Spleen (tissue), 13 donors: ENCODE measurements at regions of chr13 and their contacts with region 1.

Region 1: DNA sequence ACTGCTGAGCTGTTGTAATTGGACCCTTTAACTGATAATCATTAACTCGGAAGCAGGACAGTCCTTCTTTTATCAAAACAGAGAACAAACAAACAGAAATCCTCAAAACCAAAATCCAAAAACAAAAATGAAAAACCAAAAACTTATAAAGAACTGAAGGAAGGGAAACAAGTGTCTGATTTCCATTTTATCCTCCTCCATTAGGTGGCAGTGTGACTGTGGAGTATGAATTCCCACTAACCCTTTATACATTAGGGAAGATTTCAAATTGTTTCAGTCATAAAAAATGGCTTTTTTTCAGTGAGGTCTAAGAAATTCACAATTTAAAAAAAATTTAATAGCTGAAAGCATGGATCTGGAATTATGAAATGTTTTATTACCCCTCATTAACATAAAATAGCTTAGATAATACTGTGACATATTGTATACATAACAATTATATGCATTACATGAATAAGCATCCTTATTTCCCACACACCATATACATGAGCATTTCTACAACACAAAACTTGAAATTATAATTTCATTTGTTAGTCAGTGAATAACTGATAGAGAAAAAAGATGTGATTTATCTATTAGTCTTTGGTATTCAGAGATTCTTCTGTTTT is 1074.3 kb upstream of the PCDH9 start:
- DNase-seq: no peak
- H3K4me3 ChIP-seq: no peak overlapping the region
- H3K27ac ChIP-seq: no peak overlapping the region
- H3K4me1 ChIP-seq: no peaks in the 10 kb centered on the region
- H3K27me3 ChIP-seq: no peaks in the 10 kb centered on the region
- CTCF ChIP-seq: peak in 6 of 11 experiments; percentile 39 to 53 (median 44)
- POLR2A ChIP-seq: no peak

Region 2: DNA sequence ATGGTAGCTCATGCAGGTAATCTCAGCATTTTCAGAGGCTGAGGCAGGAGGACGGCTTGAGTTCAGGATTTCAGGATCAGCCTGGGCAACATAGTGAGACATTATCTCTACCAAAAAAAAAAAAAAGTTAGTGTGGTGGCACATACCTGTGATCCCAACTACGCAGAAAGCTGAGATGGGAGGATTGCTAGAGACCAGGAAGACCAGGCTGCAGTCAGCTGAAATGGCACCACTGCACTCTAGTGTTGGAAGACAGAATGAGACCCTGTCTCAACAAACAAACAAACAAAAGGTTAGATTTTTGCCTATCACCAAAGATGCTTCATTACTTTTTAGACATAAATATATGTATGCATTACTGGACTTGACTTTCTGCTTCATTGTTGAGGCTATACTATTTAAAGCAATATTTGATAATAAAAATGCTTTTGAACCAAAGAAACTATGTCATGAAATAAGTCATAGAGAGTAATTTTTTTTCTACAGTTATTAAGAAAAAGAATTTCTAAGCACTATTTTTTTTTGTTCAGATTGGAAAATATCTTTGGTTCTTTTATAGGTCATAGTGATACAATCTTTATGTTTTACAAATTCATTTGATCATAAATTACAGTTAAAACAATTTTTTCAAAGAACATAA is 623.1 kb after region 1 on chr13:
- intact Hi-C with region 1: loop called (anchors 10 kb)
- DNase-seq: no peak
- H3K4me3 ChIP-seq: no peak overlapping the region
- H3K27ac ChIP-seq: no peak overlapping the region
- H3K4me1 ChIP-seq: no peaks in the 10 kb centered on the region
- H3K27me3 ChIP-seq: no peaks in the 10 kb centered on the region
- CTCF ChIP-seq: peak in 6 of 11 experiments; percentile 16 to 45 (median 30)
- POLR2A ChIP-seq: no peak